Common myeloid progenitor, CD34-positive (primary cell): ENCODE measurements at regions of chr14 and their contacts with region 1.

Region 1: GRCh38 chr14:55133416-55133815 is 4.4 kb downstream of the LGALS3 start:
- DNase-seq: peak in 2 of 3 donors; percentile 26 to 44
- H3K4me3 ChIP-seq: no peak overlapping the region
- H3K27ac ChIP-seq: no peak overlapping the region
- H3K4me1 ChIP-seq: peaks cover 0 to 12% (median 10%) of the 10 kb centered on the region in 4 experiments
- H3K27me3 ChIP-seq: peaks cover 0 to 34% (median 12%) of the 10 kb centered on the region in 5 experiments

Region 2: GRCh38 chr14:54839701-54840119 is 293.7 kb before region 1 on chr14:
- CTCF ChIA-PET with region 1: no interaction called
- POLR2A ChIA-PET with region 1: no interaction called
- DNase-seq: no peak
- H3K4me3 ChIP-seq: no peak overlapping the region
- H3K27ac ChIP-seq: no peak overlapping the region
- H3K4me1 ChIP-seq: no peaks in the 10 kb centered on the region
- H3K27me3 ChIP-seq: no peaks in the 10 kb centered on the region

Region 3: DNA sequence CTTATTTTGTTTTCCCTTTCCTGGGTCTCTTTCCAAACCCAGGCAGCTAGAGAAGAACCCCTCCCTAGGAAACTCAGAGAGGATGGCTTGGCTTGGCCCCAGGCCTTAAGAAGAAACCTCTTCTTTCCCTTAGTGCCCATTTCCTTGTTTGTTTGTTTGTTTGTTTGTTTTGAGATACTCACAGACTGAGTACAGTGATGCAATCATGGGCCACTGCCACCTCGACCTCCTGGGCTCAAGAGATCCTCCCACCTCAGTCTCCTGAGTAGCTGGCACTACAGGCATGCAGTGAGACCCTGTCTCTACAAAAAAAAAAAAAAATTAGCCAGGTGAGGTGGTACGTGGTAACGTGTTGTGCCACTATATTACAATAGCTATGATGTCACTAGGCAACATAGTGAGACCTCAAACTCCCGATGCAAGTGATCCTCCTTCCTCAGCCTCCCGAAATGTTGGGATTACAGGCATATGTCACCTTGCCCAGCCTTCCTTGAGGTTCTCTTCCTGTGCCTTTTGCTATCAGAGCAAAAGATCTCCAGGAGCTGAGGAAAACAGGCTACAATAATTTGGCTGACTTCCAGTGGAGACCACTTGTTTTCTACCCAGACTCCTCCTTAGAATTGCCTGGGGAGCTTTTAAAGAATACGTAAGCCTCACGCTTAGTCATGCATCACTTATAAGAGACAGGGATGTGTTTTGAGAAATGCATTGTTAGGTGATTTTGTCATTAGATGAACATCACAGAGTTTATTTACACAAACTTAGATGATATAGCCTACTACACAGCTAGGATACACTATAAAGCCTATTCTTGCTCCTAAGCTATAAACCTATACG is 38.9 kb before region 1 on chr14:
- CTCF ChIA-PET with region 1: interaction called, 24 read pairs
- POLR2A ChIA-PET with region 1: no interaction called
- DNase-seq: no peak
- H3K4me3 ChIP-seq: no peak overlapping the region
- H3K27ac ChIP-seq: no peak overlapping the region
- H3K4me1 ChIP-seq: peaks cover 0 to 7% (median 4%) of the 10 kb centered on the region in 4 experiments
- H3K27me3 ChIP-seq: no peaks in the 10 kb centered on the region

Region 4: GRCh38 chr14:55212634-55213033 is 79.2 kb after region 1 on chr14:
- CTCF ChIA-PET with region 1: no interaction called
- POLR2A ChIA-PET with region 1: no interaction called
- DNase-seq: peak in 2 of 3 donors; percentile 13 to 17
- H3K4me3 ChIP-seq: no peak overlapping the region
- H3K27ac ChIP-seq: no peak overlapping the region
- H3K4me1 ChIP-seq: peaks cover 0 to 1% (median 0%) of the 10 kb centered on the region in 4 experiments
- H3K27me3 ChIP-seq: no peaks in the 10 kb centered on the region